ENCODE measurements at regions of chr4 and their contacts with region 1.

Region 1: GRCh38 chr4:18695733-18696527 is 674.4 kb upstream of the LCORL start:
- DNase-seq: no peak
- H3K4me3 ChIP-seq: no peak overlapping the region
- H3K27ac ChIP-seq: no peak overlapping the region
- H3K4me1 ChIP-seq: no peaks in the 10 kb centered on the region
- H3K27me3 ChIP-seq: no peaks in the 10 kb centered on the region
- CTCF ChIP-seq: no peak

Region 2: DNA sequence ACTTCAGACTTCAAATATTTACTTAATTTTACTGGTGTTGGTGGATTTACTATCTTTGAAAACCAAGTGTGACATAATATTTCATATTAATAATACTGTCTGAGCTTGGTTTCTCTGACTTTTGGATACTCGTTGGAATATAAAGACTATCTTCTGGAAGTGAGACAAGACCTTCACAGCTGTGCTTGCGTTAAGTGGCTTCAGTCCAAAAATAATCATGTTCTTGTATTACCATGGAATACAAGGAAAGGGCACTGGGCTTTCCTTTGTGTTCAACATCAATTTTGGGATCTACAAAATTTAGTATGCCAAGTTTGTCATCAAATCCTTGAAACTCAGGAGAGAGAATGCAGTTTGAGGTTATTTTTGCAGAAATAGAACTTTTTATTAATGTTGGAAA is 38.0 kb after region 1 on chr4:
- intact Hi-C with region 1: loop called (anchors 5 kb)
- DNase-seq: no peak
- H3K4me3 ChIP-seq: no peak overlapping the region
- H3K27ac ChIP-seq: no peak overlapping the region
- H3K4me1 ChIP-seq: no peaks in the 10 kb centered on the region
- H3K27me3 ChIP-seq: no peaks in the 10 kb centered on the region
- CTCF ChIP-seq: no peak

Region 3: GRCh38 chr4:18756661-18757060 is 60.7 kb after region 1 on chr4:
- intact Hi-C with region 1: no loop called
- DNase-seq: no peak
- H3K4me3 ChIP-seq: no peak overlapping the region
- H3K27ac ChIP-seq: no peak overlapping the region
- H3K4me1 ChIP-seq: no peaks in the 10 kb centered on the region
- H3K27me3 ChIP-seq: no peaks in the 10 kb centered on the region
- CTCF ChIP-seq: no peak